OCI-LY7 (cell line): ENCODE measurements at regions of chr5 and their contacts with region 1.

Region 1: GRCh38 chr5:159156426-159157238 is 52.7 kb downstream of the RNF145 start:
- DNase-seq: peak; percentile 83
- H3K4me3 ChIP-seq: no peak overlapping the region
- H3K27ac ChIP-seq: no peak overlapping the region
- H3K4me1 ChIP-seq: peaks cover 20% of the 10 kb centered on the region
- CTCF ChIP-seq: peak; percentile 98

Region 2: DNA sequence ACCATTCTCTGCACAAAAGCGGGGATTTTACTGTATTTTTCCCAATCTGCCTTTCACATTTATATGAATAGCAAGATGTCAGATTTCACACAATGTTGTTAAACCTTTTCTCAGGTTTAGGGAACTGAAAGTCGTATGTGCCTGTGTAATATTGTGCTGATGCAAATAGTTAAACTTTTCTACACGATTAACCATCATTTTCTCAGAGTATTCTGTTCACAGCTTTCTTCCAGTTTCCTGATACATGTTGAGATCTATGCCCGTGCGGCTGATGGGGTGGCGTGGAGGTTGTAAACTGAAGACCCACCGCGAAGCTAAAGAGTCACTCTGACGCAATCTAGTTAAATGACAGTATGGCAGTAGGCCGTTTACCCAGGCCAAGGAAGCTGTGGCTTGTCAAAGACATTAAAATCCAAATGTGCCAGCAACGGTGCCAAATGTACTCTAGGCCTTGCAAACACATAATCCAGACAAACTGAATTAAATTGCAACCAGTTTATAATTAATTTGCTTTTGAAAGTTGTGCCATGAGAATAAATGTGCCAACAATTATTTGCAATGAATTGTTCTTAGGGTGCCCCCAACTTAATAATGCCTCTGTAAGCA is 202.6 kb before region 1 on chr5:
- CTCF ChIA-PET with region 1: no interaction called
- POLR2A ChIA-PET with region 1: no interaction called
- intact Hi-C with region 1: no loop called
- DNase-seq: peak; percentile 92
- H3K4me3 ChIP-seq: peak overlapping the region; percentile 53
- H3K27ac ChIP-seq: peak overlapping the region; percentile 98
- H3K4me1 ChIP-seq: peaks cover 88% of the 10 kb centered on the region
- CTCF ChIP-seq: no peak

Region 3: DNA sequence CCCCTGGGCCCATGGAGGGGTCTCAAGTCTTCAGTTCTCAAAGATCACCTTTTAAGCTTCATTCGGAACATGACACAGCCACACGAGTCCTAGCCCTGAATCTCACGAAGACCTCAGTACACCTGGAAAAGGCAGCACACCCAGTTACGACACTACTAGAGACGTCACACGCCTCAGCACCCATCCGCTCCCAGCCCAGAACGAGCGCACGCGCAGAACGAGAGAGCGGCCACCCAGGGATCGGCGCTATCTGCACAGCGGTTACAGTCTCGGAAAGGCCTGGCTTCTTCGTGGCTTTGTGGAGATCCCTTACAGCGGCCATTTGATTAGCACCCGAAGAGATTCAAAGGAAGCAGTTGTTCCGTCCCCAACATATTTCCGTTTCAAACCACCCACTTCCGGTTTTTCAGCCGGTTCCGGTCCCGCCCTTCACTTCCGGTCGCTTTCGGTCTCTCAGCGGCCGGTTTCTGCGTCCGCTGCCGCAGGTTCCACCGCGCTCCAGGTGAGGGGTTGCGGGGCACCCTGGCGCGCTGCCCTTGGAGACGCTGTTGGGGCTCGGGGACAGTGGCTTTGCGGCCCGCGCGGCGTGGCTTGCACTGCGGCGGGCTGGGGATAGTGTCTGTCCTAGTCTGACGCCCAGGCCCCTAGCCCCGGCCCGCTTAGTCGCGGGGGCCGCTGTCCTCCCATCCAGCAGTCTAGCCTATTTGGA is 106.4 kb after region 1 on chr5 and contains the start of gene UBLCP1:
- CTCF ChIA-PET with region 1: no interaction called
- POLR2A ChIA-PET with region 1: no interaction called
- intact Hi-C with region 1: loop called (anchors 5 kb)
- DNase-seq: peak; percentile 92
- H3K4me3 ChIP-seq: peak within 1 kb of the TSS; percentile 97
- H3K27ac ChIP-seq: peak within 1 kb of the TSS; percentile 72
- H3K4me1 ChIP-seq: peaks cover 17% of the 10 kb centered on the region
- CTCF ChIP-seq: no peak
- total RNA-seq, gene UBLCP1: 7.7 and 11.3 TPM in 2 replicates

Region 4: GRCh38 chr5:159316519-159317383 is 160.1 kb after region 1 on chr5:
- CTCF ChIA-PET with region 1: interaction called, 4 read pairs
- POLR2A ChIA-PET with region 1: no interaction called
- intact Hi-C with region 1: loop called (anchors 1 kb)
- DNase-seq: peak; percentile 67
- H3K4me3 ChIP-seq: no peak overlapping the region
- H3K27ac ChIP-seq: no peak overlapping the region
- H3K4me1 ChIP-seq: no peaks in the 10 kb centered on the region
- CTCF ChIP-seq: peak; percentile 85

Region 5: DNA sequence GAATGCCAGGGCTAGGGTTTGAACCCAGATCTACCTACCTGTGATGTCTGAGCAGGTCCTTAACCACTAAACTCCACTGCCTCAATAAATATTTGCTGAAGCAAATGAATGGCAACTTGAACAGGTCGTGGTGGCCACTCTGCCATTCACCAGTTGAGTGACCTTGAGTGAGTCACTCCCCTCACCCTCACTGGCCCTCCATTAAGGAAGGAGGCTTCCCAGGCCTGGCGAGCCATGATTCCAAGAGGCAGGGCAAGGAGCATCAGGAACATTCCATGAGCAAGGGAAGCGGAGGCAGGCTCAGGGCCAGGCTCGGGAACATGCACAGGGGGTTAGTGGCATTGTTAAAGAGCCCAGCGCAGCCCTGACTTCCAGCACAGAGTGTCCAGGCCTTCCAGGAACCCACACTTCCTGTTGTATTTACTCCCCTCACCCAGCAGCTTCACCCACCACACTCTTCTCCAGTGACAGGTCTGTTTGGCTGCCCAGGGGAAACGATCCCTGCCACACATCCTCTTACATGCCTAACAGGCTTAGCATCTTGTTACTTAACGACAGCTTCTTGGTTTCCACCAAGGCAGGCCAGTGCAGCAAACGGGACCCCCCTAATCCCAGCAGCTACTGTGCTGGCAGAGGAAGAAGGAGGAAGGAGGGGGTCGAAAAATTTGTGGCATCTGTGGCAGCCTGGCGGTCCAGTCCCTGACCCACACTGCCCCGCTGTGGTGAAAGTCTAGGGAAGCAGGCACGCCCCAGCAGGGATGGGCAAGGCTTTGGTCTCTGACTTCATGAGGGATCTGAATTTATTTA is 808.6 kb after region 1 on chr5:
- CTCF ChIA-PET with region 1: no interaction called
- POLR2A ChIA-PET with region 1: no interaction called
- intact Hi-C with region 1: loop called (anchors 5 kb)
- DNase-seq: peak; percentile 42
- H3K4me3 ChIP-seq: no peak overlapping the region
- H3K27ac ChIP-seq: no peak overlapping the region
- H3K4me1 ChIP-seq: no peaks in the 10 kb centered on the region
- CTCF ChIP-seq: peak; percentile 76